ENCODE measurements at regions of chr11 and their contacts with region 1.

Region 1: GRCh38 chr11:36212564-36213392 is 76.4 kb downstream of the COMMD9 start:
- DNase-seq: no peak
- H3K4me3 ChIP-seq: no peak overlapping the region
- H3K27ac ChIP-seq: no peak overlapping the region
- H3K4me1 ChIP-seq: peaks cover 0 to 6% (median 3%) of the 10 kb centered on the region in 4 experiments; a peak in 4 of 7 replicates
- H3K27me3 ChIP-seq: peaks cover 0 to 2% (median 0%) of the 10 kb centered on the region in 4 experiments; a peak in 1 of 7 replicates
- CTCF ChIP-seq: no peak
- EP300 ChIP-seq: no peak
- POLR2A ChIP-seq: no peak
- RAD21 ChIP-seq: no peak

Region 2: GRCh38 chr11:36191941-36192340 is 20.8 kb before region 1 on chr11:
- CTCF ChIA-PET with region 1: interaction called, 10 read pairs
- POLR2A ChIA-PET with region 1: no interaction called
- DNase-seq: no peak
- H3K4me3 ChIP-seq: no peak overlapping the region
- H3K27ac ChIP-seq: no peak overlapping the region
- H3K4me1 ChIP-seq: peaks cover 0 to 16% (median 9%) of the 10 kb centered on the region in 4 experiments; a peak in 4 of 7 replicates
- H3K27me3 ChIP-seq: no peaks in the 10 kb centered on the region
- CTCF ChIP-seq: no peak
- EP300 ChIP-seq: no peak
- POLR2A ChIP-seq: no peak
- RAD21 ChIP-seq: no peak